WTC11 (cell line): ENCODE measurements at regions of chr12 and their contacts with region 1.

Region 1: GRCh38 chr12:122642009-122642408 is 61.1 kb downstream of the HCAR2 start:
- DNase-seq: no peak
- ATAC-seq: no peak
- H3K4me3 Mint-ChIP-seq: no peak overlapping the region
- H3K27ac Mint-ChIP-seq: no peak overlapping the region
- H3K4me1 Mint-ChIP-seq: peaks cover 21% of the 10 kb centered on the region
- H3K27me3 Mint-ChIP-seq: no peaks in the 10 kb centered on the region
- CTCF ChIP-seq: no peak

Region 2: GRCh38 chr12:122752464-122753318 is 110.7 kb after region 1 on chr12 and contains the start of gene DENR:
- CTCF ChIA-PET with region 1: interaction called, 16 read pairs
- POLR2A ChIA-PET with region 1: no interaction called
- DNase-seq: peak; percentile 100
- ATAC-seq: peak; percentile 87
- H3K4me3 Mint-ChIP-seq: peak within 1 kb of the TSS; percentile 97
- H3K27ac Mint-ChIP-seq: peak within 1 kb of the TSS; percentile 99
- H3K4me1 Mint-ChIP-seq: peaks cover 35% of the 10 kb centered on the region
- H3K27me3 Mint-ChIP-seq: no peaks in the 10 kb centered on the region
- CTCF ChIP-seq: peak; percentile 48; the same call in 1 of the 2 replicates
- total RNA-seq, gene DENR: 66.5 to 81.5 TPM (median 70.8 TPM) in 3 replicates